ENCODE measurements at regions of chr18 and their contacts with region 1.

Region 1: DNA sequence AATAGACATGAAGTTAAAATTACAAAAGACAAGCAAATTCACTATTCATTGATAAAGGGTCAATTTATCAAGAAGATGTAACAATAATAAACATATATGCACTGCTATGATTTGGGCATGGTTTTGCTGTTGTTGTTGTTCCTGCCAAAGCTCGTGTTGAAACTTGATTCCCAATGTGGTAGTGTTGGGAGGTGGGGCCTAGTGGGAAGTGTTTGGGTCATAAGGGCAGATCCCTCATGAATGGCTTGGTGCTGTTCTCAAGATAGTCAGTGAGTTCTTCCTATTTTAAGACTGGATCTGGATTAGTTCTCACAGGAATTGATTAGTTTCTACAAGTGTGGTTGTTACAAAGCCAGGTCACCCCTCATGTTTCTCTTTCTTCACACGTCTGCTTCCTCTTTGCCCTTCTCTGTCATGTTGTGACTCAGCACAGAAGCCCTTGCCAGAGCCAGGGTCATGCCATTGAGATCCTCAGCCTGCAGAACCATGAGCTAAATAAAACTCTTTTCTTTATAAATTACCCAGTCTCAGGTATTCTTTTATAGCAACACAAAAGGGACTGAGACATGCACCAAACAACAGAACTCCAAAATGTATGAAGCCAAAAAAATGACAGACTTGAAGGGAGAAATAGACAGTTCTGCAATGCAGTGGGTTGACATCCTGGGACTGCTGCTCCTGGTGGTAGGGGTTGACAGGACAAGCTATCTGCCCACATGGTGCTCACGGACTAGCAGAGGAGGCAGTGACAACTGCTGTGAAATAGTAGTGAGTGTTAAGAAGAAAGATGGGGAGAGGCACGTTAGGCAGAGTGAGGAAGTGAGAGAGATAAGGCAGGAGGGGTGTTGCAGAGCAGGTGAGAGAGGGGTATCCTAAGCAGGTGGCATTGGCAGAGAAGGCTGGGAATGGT is 18.6 kb upstream of the SKA1 start:
- DNase-seq: no peak
- H3K4me3 ChIP-seq: no peak overlapping the region
- H3K4me3 Mint-ChIP-seq: peak overlapping the region in 1 of 8 donors; percentile 19
- H3K27ac ChIP-seq: no peak overlapping the region
- H3K27ac Mint-ChIP-seq: peak overlapping the region in 3 of 7 donors; percentile 53 to 81 (median 55)
- H3K4me1 ChIP-seq: no peaks in the 10 kb centered on the region
- H3K4me1 Mint-ChIP-seq: peaks cover 4 to 9% (median 7%) of the 10 kb centered on the region in 4 donors
- H3K27me3 ChIP-seq: no peaks in the 10 kb centered on the region
- H3K27me3 Mint-ChIP-seq: peaks cover 8 to 22% of the 10 kb centered on the region in 2 donors

Region 2: DNA sequence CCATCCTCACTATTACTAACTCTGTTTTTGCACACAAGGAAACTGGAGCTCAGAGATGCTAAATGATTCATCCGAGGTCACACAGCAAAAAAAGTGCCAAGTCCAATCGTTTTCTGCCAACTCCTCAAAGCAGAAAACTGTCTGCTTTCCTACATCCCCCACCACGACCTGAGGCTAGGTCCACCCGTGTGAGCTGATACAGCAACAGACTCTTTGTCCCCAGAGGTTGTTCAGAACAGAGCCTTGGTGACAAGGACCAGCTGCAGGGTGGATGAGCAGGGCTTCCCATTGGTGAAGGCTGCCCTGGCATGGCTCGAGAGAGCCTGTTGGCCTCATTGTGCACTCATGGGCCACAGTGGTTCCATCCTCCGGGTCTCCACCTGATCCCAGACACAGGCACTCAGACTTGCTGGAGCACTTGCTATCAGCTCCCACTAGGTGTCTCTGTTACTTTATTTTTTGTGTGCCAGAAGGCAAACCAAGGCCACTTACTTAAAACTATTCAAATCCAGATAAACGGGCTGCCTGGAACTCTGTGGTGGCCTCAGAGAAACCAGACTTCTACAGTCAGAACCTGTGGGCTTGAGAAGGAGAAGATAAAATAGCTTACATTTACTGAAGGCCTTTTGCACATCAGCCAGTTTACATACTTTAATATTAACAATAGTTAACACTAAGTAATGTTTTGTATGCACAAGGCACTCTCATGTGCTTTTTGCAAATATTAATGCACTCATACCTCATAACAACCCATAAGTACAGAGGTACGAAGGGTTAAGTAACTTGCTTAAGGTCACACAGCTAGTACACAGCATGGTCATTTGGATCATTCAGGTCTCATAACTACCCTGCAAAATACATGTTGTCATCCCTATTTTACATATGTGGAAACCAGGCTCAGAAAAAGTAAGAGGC is 1880.4 kb before region 1 on chr18:
- CTCF ChIA-PET with region 1: no interaction called
- POLR2A ChIA-PET with region 1: no interaction called
- intact Hi-C with region 1: loop called (anchors 5 kb)
- DNase-seq: peak in 4 of 5 donors; percentile 33 to 41 (median 36)
- H3K4me3 ChIP-seq: no peak overlapping the region
- H3K4me3 Mint-ChIP-seq: no peak overlapping the region
- H3K27ac ChIP-seq: no peak overlapping the region
- H3K27ac Mint-ChIP-seq: peak overlapping the region in 1 of 7 donors; percentile 24
- H3K4me1 ChIP-seq: no peaks in the 10 kb centered on the region
- H3K4me1 Mint-ChIP-seq: no peaks in the 10 kb centered on the region
- H3K27me3 ChIP-seq: no peaks in the 10 kb centered on the region
- H3K27me3 Mint-ChIP-seq: peaks cover 16 to 32% of the 10 kb centered on the region in 2 donors

Region 3: GRCh38 chr18:50009773-50010335 is 346.4 kb before region 1 on chr18:
- CTCF ChIA-PET with region 1: interaction called, 13 read pairs
- POLR2A ChIA-PET with region 1: no interaction called
- intact Hi-C with region 1: no loop called
- DNase-seq: peak in 4 of 5 donors; percentile 20 to 38 (median 32)
- H3K4me3 ChIP-seq: no peak overlapping the region
- H3K4me3 Mint-ChIP-seq: no peak overlapping the region
- H3K27ac ChIP-seq: no peak overlapping the region
- H3K27ac Mint-ChIP-seq: no peak overlapping the region
- H3K4me1 ChIP-seq: no peaks in the 10 kb centered on the region
- H3K4me1 Mint-ChIP-seq: no peaks in the 10 kb centered on the region
- H3K27me3 ChIP-seq: no peaks in the 10 kb centered on the region
- H3K27me3 Mint-ChIP-seq: no peaks in the 10 kb centered on the region

Region 4: DNA sequence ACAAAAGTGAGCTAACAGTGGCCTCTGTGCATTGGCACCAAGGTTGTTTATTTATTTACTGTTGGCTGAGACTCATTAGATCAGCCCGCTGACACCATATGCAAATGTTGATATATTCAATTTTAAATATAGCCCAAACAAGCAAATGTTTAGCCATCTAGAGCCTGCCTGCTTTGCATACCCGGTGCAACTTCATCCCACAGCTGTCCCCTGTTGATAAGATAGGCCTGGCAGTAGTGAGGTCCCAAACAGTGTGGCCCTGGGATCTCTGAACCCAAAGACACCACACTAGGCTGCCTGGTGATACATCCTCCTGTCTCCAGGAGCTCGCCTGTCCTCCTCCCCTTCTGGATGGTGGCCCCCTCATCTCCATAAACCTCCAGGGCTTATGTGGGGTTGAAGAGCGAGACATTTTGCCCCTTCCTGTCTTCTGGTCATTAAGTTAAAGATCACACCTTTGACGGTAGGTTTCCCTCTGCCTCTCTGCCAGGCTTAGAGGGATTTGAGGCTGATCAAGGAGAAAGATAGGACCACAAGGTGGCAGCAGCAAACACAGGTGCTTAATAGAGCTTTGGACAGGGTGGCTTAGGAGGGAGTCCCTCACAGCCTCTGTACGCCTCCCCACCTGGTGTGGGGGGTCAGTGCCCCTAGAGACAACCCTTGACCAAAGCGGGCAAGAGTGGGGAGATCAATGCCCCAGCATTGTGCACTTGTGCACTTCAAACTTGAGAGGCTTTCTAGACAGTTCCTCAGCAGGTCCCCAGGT is 137.7 kb before region 1 on chr18:
- CTCF ChIA-PET with region 1: interaction called, 163 read pairs
- POLR2A ChIA-PET with region 1: interaction called, 4 read pairs
- intact Hi-C with region 1: no loop called
- DNase-seq: peak in 4 of 5 donors; percentile 13 to 33 (median 21)
- H3K4me3 ChIP-seq: no peak overlapping the region
- H3K4me3 Mint-ChIP-seq: no peak overlapping the region
- H3K27ac ChIP-seq: no peak overlapping the region
- H3K27ac Mint-ChIP-seq: no peak overlapping the region
- H3K4me1 ChIP-seq: no peaks in the 10 kb centered on the region
- H3K4me1 Mint-ChIP-seq: no peaks in the 10 kb centered on the region
- H3K27me3 ChIP-seq: no peaks in the 10 kb centered on the region
- H3K27me3 Mint-ChIP-seq: peaks cover 31 to 32% of the 10 kb centered on the region in 2 donors

Region 5: DNA sequence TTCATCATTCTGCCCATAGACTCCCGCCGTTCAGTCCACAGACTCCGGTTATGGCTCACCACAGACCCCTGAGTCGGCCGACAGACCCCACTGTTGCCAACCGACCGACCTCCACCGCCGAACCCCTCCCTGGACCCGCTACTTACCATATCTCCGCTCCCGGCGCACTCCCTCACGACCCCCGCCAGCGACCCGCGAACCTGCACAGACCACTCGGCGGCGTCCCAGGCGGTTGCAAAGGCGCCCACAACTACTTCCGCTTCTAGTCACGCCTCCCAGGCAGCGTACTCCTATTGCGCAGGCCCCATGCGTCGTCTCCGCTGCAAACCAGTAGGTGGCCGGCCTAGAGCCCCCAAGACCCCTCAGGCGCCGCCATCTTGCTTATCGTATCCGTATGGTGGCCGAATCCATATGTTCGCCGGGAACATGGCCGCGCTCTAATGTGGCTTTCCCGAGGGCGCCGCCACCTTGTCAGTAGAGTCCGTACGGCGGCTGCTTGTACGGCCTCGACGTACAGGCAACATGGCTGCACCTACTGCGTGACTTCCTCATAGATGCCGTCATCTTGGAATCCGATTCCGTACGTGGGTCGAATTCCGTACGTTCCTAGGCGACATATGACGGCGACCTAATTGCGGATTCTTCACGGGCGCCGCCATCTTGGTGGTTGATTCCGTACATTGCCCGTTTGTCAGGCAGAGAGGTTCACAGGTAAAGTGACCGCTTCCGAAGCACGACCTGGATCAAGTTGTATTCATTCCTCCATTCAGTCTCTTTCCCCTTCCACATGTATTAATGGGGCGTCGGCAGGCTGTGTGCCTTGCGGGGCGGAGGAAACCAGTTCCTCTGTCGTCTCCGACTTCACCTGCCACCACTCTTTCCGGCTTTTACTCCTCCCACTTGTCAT is 68.6 kb before region 1 on chr18 and contains the start of gene CXXC1:
- CTCF ChIA-PET with region 1: interaction called, 7 read pairs
- POLR2A ChIA-PET with region 1: interaction called, 3 read pairs
- intact Hi-C with region 1: loop called (anchors 1 kb)
- DNase-seq: peak; percentile 96 to 99 (median 98)
- H3K4me3 ChIP-seq: peak within 1 kb of the TSS; percentile 82 to 88
- H3K4me3 Mint-ChIP-seq: peak within 1 kb of the TSS; percentile 96 to 100 (median 99)
- H3K27ac ChIP-seq: peak within 1 kb of the TSS; percentile 82
- H3K27ac Mint-ChIP-seq: peak within 1 kb of the TSS; percentile 91 to 100 (median 100)
- H3K4me1 ChIP-seq: peaks cover 14% of the 10 kb centered on the region
- H3K4me1 Mint-ChIP-seq: peaks cover 19 to 44% (median 28%) of the 10 kb centered on the region in 4 donors
- H3K27me3 ChIP-seq: no peaks in the 10 kb centered on the region
- H3K27me3 Mint-ChIP-seq: no peaks in the 10 kb centered on the region
- total RNA-seq, gene CXXC1: 165 to 191 TPM

Region 6: DNA sequence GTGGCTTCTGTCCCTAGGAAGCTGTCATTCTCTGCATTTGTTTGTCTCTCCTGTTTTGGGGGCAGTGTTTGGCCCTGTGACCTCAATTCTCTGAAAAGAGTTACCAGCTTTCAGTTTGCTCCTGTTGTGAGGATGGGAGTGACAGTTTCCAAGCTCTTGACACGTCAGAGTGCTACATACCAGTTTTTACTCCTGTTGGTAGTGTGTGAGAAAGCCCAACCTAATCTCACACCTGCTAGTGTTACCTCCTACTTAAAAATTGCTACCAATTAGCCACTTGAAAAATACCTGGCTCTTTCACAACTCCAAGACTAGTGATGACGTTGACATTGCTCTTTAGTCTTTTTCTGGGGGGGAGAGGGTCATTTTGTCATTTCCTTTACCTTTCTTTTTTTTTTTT is 32.7 kb after region 1 on chr18:
- CTCF ChIA-PET with region 1: interaction called, 18 read pairs
- POLR2A ChIA-PET with region 1: no interaction called
- intact Hi-C with region 1: no loop called
- DNase-seq: no peak
- H3K4me3 ChIP-seq: no peak overlapping the region
- H3K4me3 Mint-ChIP-seq: no peak overlapping the region
- H3K27ac ChIP-seq: no peak overlapping the region
- H3K27ac Mint-ChIP-seq: no peak overlapping the region
- H3K4me1 ChIP-seq: no peaks in the 10 kb centered on the region
- H3K4me1 Mint-ChIP-seq: no peaks in the 10 kb centered on the region
- H3K27me3 ChIP-seq: no peaks in the 10 kb centered on the region
- H3K27me3 Mint-ChIP-seq: no peaks in the 10 kb centered on the region